Posterior vena cava (tissue), 2 donors: ENCODE measurements at regions of chr4 and their contacts with region 1.

Region 1: DNA sequence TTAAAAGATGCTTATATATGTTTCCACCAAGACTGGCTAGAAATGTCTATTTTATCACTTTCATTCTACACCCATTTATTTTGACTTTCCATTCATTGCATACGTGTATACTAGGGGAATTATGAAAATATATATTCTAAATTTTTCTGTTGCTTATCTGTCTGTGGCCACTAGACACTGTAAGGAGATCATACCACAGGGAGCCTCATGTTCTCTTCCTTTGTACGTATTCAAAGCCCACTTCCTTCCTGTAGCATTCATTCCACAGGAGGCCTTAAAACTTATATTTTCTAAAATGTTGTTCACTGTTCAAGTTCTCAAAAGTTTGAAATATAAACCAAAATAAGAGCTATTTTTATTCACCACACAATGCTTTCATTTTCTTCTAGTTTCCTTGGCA is 1848.9 kb upstream of the TENM3 start:
- DNase-seq: no peak

Region 2: DNA sequence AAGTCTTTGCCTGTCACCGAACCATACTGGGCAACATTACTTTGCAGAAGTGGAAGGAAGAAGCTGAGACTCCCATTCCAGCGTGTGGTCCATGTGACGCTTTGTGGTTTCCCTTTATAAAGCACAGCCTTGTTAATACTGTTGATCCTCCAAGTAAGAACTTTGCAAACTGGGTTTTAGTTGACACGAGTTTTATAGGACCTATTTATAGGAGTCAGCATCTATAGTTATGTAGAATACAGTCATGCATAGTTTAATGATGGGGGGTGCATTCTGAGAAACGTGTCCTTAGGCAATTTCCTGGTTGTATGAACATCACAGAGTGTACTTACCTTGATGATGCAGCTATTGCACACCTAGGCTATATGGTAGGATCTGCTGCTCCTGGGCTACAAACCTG is 30.5 kb before region 1 on chr4:
- intact Hi-C with region 1: no loop called
- DNase-seq: no peak

Region 3: GRCh38 chr4:180434131-180434895 is 40.0 kb after region 1 on chr4:
- intact Hi-C with region 1: loop called in 1 of 2 experiments (anchors 1 kb)
- DNase-seq: no peak